ENCODE measurements at regions of chr1 and their contacts with region 1.

Region 1: GRCh38 chr1:89890085-89890752 is 69.4 kb downstream of the LRRC8D start:
- DNase-seq: peak; percentile 88 to 100
- H3K4me3 ChIP-seq: peak overlapping the region; percentile 14; the same call in 1 of the 2 replicates
- H3K27ac ChIP-seq: peak overlapping the region; percentile 94
- H3K4me1 ChIP-seq: peaks cover 93% of the 10 kb centered on the region
- H3K27me3 ChIP-seq: no peaks in the 10 kb centered on the region
- CTCF ChIP-seq: no peak

Region 2: GRCh38 chr1:89843281-89844121 is 46.7 kb before region 1 on chr1:
- CTCF ChIA-PET with region 1: no interaction called
- POLR2A ChIA-PET with region 1: no interaction called
- intact Hi-C with region 1: loop called (anchors 2 kb)
- DNase-seq: peak; percentile 45 to 67
- H3K4me3 ChIP-seq: peak overlapping the region; percentile 78
- H3K27ac ChIP-seq: peak overlapping the region; percentile 60
- H3K4me1 ChIP-seq: peaks cover 45% of the 10 kb centered on the region
- H3K27me3 ChIP-seq: no peaks in the 10 kb centered on the region
- CTCF ChIP-seq: peak; percentile 68

Region 3: GRCh38 chr1:89865498-89866385 is 24.5 kb before region 1 on chr1:
- CTCF ChIA-PET with region 1: no interaction called
- POLR2A ChIA-PET with region 1: no interaction called
- intact Hi-C with region 1: loop called (anchors 1 kb)
- DNase-seq: peak; percentile 28 to 100
- H3K4me3 ChIP-seq: peak overlapping the region; percentile 16; the same call in 1 of the 2 replicates
- H3K27ac ChIP-seq: peak overlapping the region; percentile 91
- H3K4me1 ChIP-seq: peaks cover 65% of the 10 kb centered on the region
- H3K27me3 ChIP-seq: no peaks in the 10 kb centered on the region
- CTCF ChIP-seq: no peak

Region 4: DNA sequence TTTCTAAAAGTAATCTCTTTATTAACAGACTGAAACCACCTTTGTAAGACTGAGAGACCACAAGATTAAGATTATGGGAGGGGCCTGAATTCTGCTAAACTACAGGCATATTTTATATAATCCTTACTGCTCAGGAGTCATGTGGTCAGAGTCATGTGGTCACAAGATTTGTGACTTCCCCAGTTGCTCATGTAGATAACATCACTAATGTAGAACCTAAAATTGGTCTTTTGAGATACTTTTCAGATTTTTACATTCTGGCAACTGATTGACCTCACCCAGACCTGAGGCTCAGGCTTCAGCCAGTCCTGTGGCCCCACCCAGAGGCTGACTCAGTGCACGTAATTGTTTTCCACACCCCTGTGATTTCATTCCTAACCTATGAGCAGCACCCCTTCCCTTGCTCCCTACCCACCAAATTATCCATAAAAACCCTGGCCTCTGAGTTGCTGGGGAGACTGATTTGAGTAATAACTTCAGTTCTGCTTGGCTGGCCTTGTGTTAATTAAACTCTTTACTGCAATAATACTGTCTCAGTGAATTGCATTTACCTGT is 62.9 kb after region 1 on chr1:
- CTCF ChIA-PET with region 1: no interaction called
- POLR2A ChIA-PET with region 1: no interaction called
- intact Hi-C with region 1: loop called (anchors 1 kb)
- DNase-seq: peak; percentile 83 to 98
- H3K4me3 ChIP-seq: no peak overlapping the region
- H3K27ac ChIP-seq: peak overlapping the region; percentile 94
- H3K4me1 ChIP-seq: peaks cover 73% of the 10 kb centered on the region
- H3K27me3 ChIP-seq: no peaks in the 10 kb centered on the region
- CTCF ChIP-seq: no peak

Measured in PC-9 (cell line).